Activated CD4-positive, alpha-beta memory T cell treated with anti-CD3 and anti-CD28 coated beads for 36 hours (primary cell): ENCODE measurements at regions of chr18 and their contacts with region 1.

Region 1: DNA sequence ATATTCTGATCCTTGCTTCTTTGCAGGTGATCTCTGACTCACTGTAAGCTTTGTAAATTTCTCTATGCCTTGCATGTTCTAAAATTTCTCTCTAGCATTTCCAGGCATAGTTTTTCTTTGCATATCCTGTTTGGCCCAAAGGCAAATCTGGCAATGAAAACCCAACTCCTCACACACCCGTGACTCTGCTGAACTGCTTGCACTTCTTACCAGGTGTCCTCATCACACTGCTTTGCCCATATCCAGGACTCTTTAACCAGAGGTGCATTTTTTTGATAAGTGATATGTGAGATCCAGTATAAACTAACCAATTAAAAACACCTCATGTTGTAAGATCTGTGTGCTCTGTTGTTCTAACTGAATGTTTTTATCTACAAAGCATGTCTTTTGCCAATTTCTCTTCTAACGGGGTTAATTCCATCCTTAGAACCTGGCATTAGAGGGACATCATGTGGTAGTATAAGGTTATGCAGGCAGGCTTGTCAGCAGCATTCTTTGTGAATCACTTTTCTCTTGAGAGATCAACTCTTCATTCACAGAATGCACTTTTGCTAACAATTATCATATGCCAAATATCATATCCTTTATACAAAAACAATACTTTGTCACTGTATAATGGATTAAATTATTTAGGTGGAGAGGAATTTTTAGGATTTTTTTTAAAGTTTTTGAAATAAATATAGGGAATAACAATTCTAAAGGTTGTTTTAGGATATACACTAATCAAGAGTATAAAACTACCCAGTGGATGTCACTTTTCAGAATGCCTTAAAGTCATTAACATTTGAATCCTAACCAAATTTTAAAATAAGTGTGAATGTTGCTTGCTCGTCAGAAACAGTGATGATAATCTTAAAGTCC is 20.8 kb upstream of the TMX3 start:
- DNase-seq: no peak
- H3K4me3 Mint-ChIP-seq: no peak overlapping the region
- H3K27ac Mint-ChIP-seq: no peak overlapping the region
- H3K4me1 Mint-ChIP-seq: no peaks in the 10 kb centered on the region
- H3K27me3 Mint-ChIP-seq: no peaks in the 10 kb centered on the region

Region 2: DNA sequence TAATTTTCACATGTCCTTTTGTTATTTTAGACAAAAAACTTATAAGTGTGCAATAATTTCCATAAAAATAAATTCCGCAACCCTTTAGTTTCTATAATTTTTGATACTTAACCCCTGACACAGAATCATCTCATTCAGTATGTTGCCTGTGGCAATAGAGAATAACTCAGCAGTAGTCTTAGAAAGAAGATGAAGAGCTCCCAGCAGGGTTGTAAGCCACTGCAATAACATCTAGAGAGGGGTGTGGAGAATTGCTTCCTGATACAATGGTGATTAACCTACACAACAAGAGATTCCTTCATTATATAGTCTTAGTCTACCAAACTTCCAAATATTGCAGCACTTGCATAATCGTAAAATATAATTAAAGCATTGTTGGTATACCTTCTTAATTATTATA is 139.7 kb before region 1 on chr18:
- CTCF ChIA-PET with region 1: no interaction called
- POLR2A ChIA-PET with region 1: no interaction called
- intact Hi-C with region 1: no loop called
- DNase-seq: no peak
- H3K4me3 Mint-ChIP-seq: no peak overlapping the region
- H3K27ac Mint-ChIP-seq: no peak overlapping the region
- H3K4me1 Mint-ChIP-seq: no peaks in the 10 kb centered on the region
- H3K27me3 Mint-ChIP-seq: no peaks in the 10 kb centered on the region

Region 3: DNA sequence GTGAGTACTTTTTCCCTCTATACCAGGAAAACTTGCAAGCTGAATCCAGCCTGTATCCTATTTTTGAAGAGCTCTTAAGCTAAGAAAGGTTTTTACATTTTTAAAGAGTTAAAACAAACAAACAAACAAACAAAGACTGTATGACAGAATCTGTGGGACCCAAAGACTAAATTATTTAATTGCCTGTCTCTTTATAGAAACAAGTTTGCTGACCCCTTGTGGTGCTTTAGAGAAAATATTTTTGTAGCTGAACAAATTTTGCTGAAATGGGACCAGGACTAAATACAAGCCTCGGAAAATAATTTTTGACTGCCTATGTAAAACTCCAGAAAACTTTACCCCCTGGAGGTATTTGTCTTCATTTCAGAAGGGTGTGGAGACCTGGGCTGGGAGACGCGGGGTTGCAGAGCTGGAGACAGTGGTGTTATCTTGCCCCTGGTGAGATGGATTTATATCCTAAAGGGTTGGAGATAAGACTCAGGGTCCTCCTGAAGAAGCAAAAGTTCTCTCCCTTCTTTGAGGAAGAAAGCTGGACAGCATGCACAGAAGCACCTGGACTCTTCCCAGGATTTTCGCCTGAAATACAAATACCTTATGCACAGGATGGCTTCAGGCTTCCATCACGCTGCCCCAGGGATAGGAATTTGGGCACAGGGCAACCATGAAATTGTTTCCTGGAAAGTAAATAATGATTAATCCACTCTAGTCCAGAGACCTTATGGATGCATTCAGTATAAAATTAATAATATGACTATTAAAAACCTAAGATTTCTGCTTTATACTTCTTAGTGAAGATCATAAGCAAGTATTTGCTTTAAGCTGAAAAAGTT is 75.1 kb before region 1 on chr18:
- CTCF ChIA-PET with region 1: no interaction called
- POLR2A ChIA-PET with region 1: no interaction called
- intact Hi-C with region 1: loop called (anchors 2 kb)
- DNase-seq: no peak
- H3K4me3 Mint-ChIP-seq: no peak overlapping the region
- H3K27ac Mint-ChIP-seq: no peak overlapping the region
- H3K4me1 Mint-ChIP-seq: no peaks in the 10 kb centered on the region
- H3K27me3 Mint-ChIP-seq: peaks cover 2% of the 10 kb centered on the region

Region 4: GRCh38 chr18:68714609-68715496 is 20.9 kb before region 1 on chr18 and contains the start of gene TMX3:
- CTCF ChIA-PET with region 1: interaction called, 3 read pairs
- POLR2A ChIA-PET with region 1: no interaction called
- intact Hi-C with region 1: loop called (anchors 1 kb)
- DNase-seq: peak; percentile 94
- H3K4me3 Mint-ChIP-seq: peak within 1 kb of the TSS; percentile 97
- H3K27ac Mint-ChIP-seq: peak within 1 kb of the TSS; percentile 93
- H3K4me1 Mint-ChIP-seq: peaks cover 42% of the 10 kb centered on the region
- H3K27me3 Mint-ChIP-seq: no peaks in the 10 kb centered on the region
- total RNA-seq, gene TMX3: 42.4 to 44.6 TPM

Region 5: GRCh38 chr18:68991286-68991685 is 255.6 kb after region 1 on chr18:
- CTCF ChIA-PET with region 1: no interaction called
- POLR2A ChIA-PET with region 1: no interaction called
- intact Hi-C with region 1: no loop called
- DNase-seq: no peak
- H3K4me3 Mint-ChIP-seq: no peak overlapping the region
- H3K27ac Mint-ChIP-seq: no peak overlapping the region
- H3K4me1 Mint-ChIP-seq: no peaks in the 10 kb centered on the region
- H3K27me3 Mint-ChIP-seq: no peaks in the 10 kb centered on the region

Region 6: DNA sequence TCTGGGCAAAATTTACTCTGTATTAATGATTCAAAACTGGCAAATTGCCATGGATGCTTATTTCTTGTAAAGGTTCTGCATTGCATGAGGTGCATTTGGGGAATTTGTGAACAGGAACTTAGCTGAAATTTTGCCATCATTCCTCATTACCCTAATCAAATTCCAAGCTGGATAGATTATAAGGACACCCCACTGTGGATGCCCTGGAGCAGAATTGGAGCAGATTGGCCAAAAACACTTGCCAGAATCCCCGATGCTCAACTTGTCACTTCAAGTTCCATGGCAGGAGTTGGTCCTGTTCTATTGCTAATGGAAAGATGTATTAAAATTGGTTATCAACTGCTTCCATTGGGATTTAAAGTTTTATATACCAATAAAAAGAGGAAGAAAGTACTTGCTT is 300.0 kb after region 1 on chr18:
- CTCF ChIA-PET with region 1: no interaction called
- POLR2A ChIA-PET with region 1: no interaction called
- intact Hi-C with region 1: no loop called
- DNase-seq: no peak
- H3K4me3 Mint-ChIP-seq: no peak overlapping the region
- H3K27ac Mint-ChIP-seq: no peak overlapping the region
- H3K4me1 Mint-ChIP-seq: no peaks in the 10 kb centered on the region
- H3K27me3 Mint-ChIP-seq: no peaks in the 10 kb centered on the region